Panc1 (cell line): ENCODE measurements at regions of chr13 and their contacts with region 1.

Region 1: DNA sequence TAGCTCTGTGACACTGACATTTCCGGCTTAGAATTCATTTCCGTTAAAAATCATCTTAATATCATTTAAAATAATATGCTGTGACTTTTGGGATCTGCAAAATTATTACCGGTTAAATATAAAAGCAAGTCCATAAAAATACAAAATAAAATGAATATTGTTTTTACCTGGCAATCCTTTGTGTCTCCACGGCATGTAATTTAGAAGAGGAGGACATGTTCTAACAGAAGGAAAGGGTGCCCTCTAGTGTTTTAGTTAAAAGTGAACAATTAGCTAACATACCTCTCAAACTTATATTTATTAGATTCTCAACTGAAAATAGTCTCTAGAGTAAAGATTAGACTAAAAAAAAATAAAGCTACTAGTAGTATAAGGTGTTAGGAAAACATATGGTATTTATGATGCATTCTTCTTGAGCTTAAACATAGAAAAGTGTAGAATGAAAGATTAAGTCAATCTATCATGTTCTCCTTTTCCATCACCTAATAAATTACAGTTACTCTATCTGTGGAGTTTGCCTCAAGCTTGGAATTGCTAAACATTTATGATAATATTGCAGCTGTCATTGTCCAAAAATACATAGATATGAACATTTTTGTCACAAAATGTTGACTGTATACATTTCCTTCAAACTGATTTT is 676.7 kb upstream of the SPRY2 start:
- DNase-seq: no peak
- ATAC-seq: no peak; the same call in 1 of the 2 replicates
- H3K4me3 ChIP-seq: no peak overlapping the region
- H3K27ac ChIP-seq: no peak overlapping the region
- H3K4me1 ChIP-seq: no peaks in the 10 kb centered on the region
- H3K27me3 ChIP-seq: no peaks in the 10 kb centered on the region
- CTCF ChIP-seq: peak; percentile 47; the same call in 1 of the 2 replicates

Region 2: GRCh38 chr13:80716610-80717081 is 301.0 kb before region 1 on chr13:
- CTCF ChIA-PET with region 1: no interaction called
- POLR2A ChIA-PET with region 1: no interaction called
- in situ Hi-C with region 1: no loop called
- intact Hi-C with region 1: no loop called
- DNase-seq: no peak
- ATAC-seq: no peak
- H3K4me3 ChIP-seq: no peak overlapping the region
- H3K27ac ChIP-seq: no peak overlapping the region
- H3K4me1 ChIP-seq: no peaks in the 10 kb centered on the region
- H3K27me3 ChIP-seq: no peaks in the 10 kb centered on the region
- CTCF ChIP-seq: no peak

Region 3: DNA sequence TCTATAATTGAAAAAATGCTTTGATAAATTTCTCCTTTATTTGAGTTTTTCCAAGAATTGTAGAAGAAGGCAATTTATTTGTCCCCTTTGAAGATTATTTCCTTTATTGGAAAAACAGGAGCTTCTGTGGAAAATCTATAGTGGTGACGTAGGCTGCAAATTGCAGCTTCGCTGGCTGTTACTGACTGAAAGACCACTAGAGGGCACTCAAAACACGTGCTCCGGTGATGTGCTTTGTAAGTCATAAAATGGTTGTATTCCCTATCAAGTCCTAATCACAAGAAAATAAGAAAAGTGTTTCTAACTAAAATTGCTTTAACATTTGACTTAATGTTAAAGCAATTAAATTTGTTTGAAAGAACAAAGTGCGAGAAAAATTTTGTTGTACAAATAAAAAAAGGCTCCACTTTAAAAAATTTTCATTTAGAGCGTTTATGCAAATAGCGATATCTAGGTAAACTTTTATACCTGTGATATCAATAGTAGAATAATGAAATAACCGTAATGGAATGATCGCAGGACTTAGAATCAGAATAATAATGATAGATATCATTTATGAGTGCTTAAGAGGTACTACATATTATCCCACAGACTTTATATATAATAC is 38.5 kb before region 1 on chr13:
- CTCF ChIA-PET with region 1: interaction called, 6 read pairs
- POLR2A ChIA-PET with region 1: no interaction called
- in situ Hi-C with region 1: no loop called
- intact Hi-C with region 1: loop called (anchors 5 kb)
- DNase-seq: peak; percentile 47
- ATAC-seq: peak; percentile 80; the same call in 1 of the 2 replicates
- H3K4me3 ChIP-seq: peak overlapping the region; percentile 13 to 24; a peak in 2 of 4 replicates
- H3K27ac ChIP-seq: no peak overlapping the region
- H3K4me1 ChIP-seq: no peaks in the 10 kb centered on the region
- H3K27me3 ChIP-seq: no peaks in the 10 kb centered on the region
- CTCF ChIP-seq: peak; percentile 85

Region 4: DNA sequence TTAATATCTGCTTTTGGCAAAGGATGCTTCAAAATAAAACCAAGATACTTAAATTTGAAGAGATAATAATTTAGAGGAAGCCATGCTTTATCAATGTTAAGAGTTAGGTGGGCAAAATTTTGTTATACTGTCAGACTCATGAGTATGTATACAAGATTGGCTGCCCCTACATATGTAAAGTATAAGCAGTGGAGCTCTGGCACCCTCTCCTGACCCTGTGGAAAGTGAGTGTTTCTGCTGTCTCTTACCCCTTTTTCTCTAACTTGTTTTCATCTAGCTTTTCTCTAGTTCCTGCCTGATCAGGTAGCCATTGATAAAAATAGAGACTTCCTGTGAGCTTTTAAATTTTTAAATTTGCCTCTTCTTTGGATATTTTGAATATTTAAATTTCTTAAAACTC is 34.2 kb after region 1 on chr13:
- CTCF ChIA-PET with region 1: no interaction called
- POLR2A ChIA-PET with region 1: no interaction called
- in situ Hi-C with region 1: no loop called
- intact Hi-C with region 1: no loop called
- DNase-seq: no peak
- ATAC-seq: no peak
- H3K4me3 ChIP-seq: no peak overlapping the region
- H3K27ac ChIP-seq: no peak overlapping the region
- H3K4me1 ChIP-seq: no peaks in the 10 kb centered on the region
- H3K27me3 ChIP-seq: no peaks in the 10 kb centered on the region
- CTCF ChIP-seq: peak; percentile 52; the same call in 1 of the 2 replicates